ENCODE measurements at regions of chr2 and their contacts with region 1.

Region 1: GRCh38 chr2:238203094-238203972 is at the start of gene ILKAP:
- DNase-seq: peak; percentile 83 to 97 (median 89)
- ATAC-seq: peak; percentile 97
- H3K4me3 ChIP-seq: peak within 1 kb of the TSS; percentile 70
- H3K4me3 Mint-ChIP-seq: peak within 1 kb of the TSS; percentile 95
- H3K27ac ChIP-seq: peak within 1 kb of the TSS; percentile 77 to 79
- H3K27ac Mint-ChIP-seq: peak within 1 kb of the TSS; percentile 91
- H3K4me1 ChIP-seq: peaks cover 34% of the 10 kb centered on the region
- H3K4me1 Mint-ChIP-seq: peaks cover 40% of the 10 kb centered on the region
- H3K27me3 ChIP-seq: no peaks in the 10 kb centered on the region
- H3K27me3 Mint-ChIP-seq: no peaks in the 10 kb centered on the region
- CTCF ChIP-seq: no peak
- total RNA-seq, gene ILKAP: 133 to 143 TPM

Region 2: DNA sequence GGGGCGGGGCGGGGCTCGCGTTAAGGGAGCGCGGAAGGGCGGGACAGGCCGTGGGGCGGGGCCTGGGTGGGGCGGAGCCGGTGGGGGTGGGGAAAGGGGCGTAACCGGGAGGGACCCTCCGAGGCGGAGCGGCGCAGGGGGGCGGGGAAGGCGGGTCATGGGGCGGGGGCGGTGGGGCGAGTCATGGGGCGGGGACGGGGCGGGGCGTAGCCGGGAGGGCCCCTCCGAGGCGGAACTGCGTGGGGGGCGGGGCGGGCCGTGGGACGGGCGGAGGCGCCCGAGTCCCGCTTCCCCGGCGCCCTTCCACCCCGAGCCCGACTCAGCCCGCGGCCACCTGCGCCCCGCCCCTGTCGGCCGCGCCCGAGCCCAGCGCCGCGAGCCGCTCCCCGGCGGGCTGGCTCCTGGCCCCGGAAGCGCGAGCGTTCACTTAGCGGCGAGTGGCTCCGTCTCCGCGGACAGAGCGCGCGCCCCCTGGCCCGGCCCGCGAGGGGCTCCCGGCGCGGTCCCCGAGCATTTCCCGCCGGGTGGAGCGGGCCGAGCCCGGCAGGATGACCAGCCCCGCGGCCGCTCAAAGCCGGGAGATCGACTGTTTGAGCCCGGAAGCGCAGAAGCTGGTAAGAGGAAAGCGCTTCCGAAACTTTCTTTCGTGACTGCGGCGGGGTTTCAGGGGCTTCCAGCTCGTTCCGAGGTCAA is 511.3 kb before region 1 on chr2:
- CTCF ChIA-PET with region 1: no interaction called
- POLR2A ChIA-PET with region 1: no interaction called
- intact Hi-C with region 1: loop called in 1 of 2 experiments (anchors 10 kb)
- DNase-seq: peak; percentile 90 to 98 (median 95)
- ATAC-seq: peak; percentile 48
- H3K4me3 ChIP-seq: peak overlapping the region; percentile 90
- H3K4me3 Mint-ChIP-seq: peak overlapping the region; percentile 89
- H3K27ac ChIP-seq: peak overlapping the region; percentile 87 to 96
- H3K27ac Mint-ChIP-seq: peak overlapping the region; percentile 93
- H3K4me1 ChIP-seq: peaks cover 77% of the 10 kb centered on the region
- H3K4me1 Mint-ChIP-seq: peaks cover 74% of the 10 kb centered on the region
- H3K27me3 ChIP-seq: no peaks in the 10 kb centered on the region
- H3K27me3 Mint-ChIP-seq: no peaks in the 10 kb centered on the region
- CTCF ChIP-seq: no peak

Region 3: DNA sequence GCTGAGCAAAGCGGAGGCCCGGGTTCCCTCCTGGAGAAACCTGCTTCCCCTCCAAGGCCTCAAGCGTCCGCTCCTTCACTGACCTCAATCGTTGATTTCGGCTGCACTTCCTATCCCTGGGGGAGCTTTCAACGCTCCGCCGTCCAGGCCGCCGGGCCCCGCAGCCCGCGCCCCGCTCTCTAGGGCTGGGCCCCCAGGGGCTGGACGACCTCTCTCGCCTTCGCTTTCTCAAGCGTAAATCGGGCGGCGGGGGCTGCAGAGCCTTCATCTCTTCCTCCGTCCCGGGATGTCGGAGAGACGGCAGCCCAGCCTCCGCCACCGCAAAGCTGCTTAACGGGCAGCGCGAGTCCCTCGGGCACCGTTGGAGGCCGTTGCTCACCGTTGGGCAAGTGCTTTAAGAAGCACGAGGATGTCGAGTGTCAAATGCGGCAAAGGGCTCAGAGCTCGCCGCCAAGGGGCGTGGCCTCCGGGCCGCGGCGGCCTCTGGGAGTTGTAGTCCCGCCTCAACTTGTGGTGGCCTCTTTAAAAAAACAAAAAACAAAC is 28.0 kb after region 1 on chr2:
- CTCF ChIA-PET with region 1: interaction called, 4 read pairs
- POLR2A ChIA-PET with region 1: interaction called, 18 read pairs
- intact Hi-C with region 1: loop called (anchors 2 kb)
- DNase-seq: peak; percentile 69 to 92 (median 77)
- ATAC-seq: peak; percentile 89
- H3K4me3 ChIP-seq: peak overlapping the region; percentile 59
- H3K4me3 Mint-ChIP-seq: peak overlapping the region; percentile 78
- H3K27ac ChIP-seq: no peak overlapping the region
- H3K27ac Mint-ChIP-seq: no peak overlapping the region
- H3K4me1 ChIP-seq: peaks cover 25% of the 10 kb centered on the region
- H3K4me1 Mint-ChIP-seq: peaks cover 23% of the 10 kb centered on the region
- H3K27me3 ChIP-seq: peaks cover 0 to 8% of the 10 kb centered on the region in 2 experiments
- H3K27me3 Mint-ChIP-seq: peaks cover 19% of the 10 kb centered on the region
- CTCF ChIP-seq: no peak